Naive thymus-derived CD4-positive, alpha-beta T cell (primary cell): ENCODE measurements at regions of chr1 and their contacts with region 1.

Region 1: GRCh38 chr1:226424228-226425003 is 16.5 kb upstream of the PARP1 start:
- DNase-seq: peak in 5 of 9 donors; percentile 29 to 54 (median 44)
- ATAC-seq: peak; percentile 68
- H3K4me3 ChIP-seq: peak overlapping the region; percentile 33
- H3K4me3 Mint-ChIP-seq: peak overlapping the region in 1 of 10 donors; percentile 21
- H3K27ac ChIP-seq: no peak overlapping the region
- H3K27ac Mint-ChIP-seq: no peak overlapping the region
- H3K4me1 ChIP-seq: peaks cover 11% of the 10 kb centered on the region in 2 donors
- H3K4me1 Mint-ChIP-seq: peaks cover 15 to 34% (median 21%) of the 10 kb centered on the region in 7 donors
- H3K27me3 ChIP-seq: no peaks in the 10 kb centered on the region
- H3K27me3 Mint-ChIP-seq: peaks cover 0 to 8% (median 0%) of the 10 kb centered on the region in 5 donors

Region 2: GRCh38 chr1:226444901-226445300 is 20.5 kb after region 1 on chr1:
- CTCF ChIA-PET with region 1: interaction called, 31 read pairs
- POLR2A ChIA-PET with region 1: interaction called, 23 read pairs
- intact Hi-C with region 1: loop called (anchors 1 kb)
- DNase-seq: peak; percentile 18 to 89 (median 78)
- ATAC-seq: peak; percentile 98
- H3K4me3 ChIP-seq: no peak overlapping the region
- H3K4me3 Mint-ChIP-seq: peak overlapping the region; percentile 41 to 74 (median 58)
- H3K27ac ChIP-seq: no peak overlapping the region
- H3K27ac Mint-ChIP-seq: peak overlapping the region; percentile 64 to 96 (median 83)
- H3K4me1 ChIP-seq: peaks cover 16 to 26% of the 10 kb centered on the region in 2 donors
- H3K4me1 Mint-ChIP-seq: peaks cover 26 to 41% (median 35%) of the 10 kb centered on the region in 7 donors
- H3K27me3 ChIP-seq: no peaks in the 10 kb centered on the region
- H3K27me3 Mint-ChIP-seq: peaks cover 0 to 51% (median 0%) of the 10 kb centered on the region in 5 donors

Region 3: GRCh38 chr1:226608699-226609505 is 184.5 kb after region 1 on chr1:
- CTCF ChIA-PET with region 1: interaction called, 29 read pairs
- POLR2A ChIA-PET with region 1: interaction called, 3 read pairs
- intact Hi-C with region 1: loop called in 1 of 2 experiments (anchors 1 kb)
- DNase-seq: peak; percentile 44 to 75 (median 62)
- ATAC-seq: peak; percentile 84
- H3K4me3 ChIP-seq: no peak overlapping the region
- H3K4me3 Mint-ChIP-seq: no peak overlapping the region
- H3K27ac ChIP-seq: no peak overlapping the region
- H3K27ac Mint-ChIP-seq: peak overlapping the region in 1 of 9 donors; percentile 21
- H3K4me1 ChIP-seq: no peaks in the 10 kb centered on the region
- H3K4me1 Mint-ChIP-seq: peaks cover 0 to 3% (median 0%) of the 10 kb centered on the region in 7 donors
- H3K27me3 ChIP-seq: no peaks in the 10 kb centered on the region
- H3K27me3 Mint-ChIP-seq: peaks cover 0 to 6% (median 0%) of the 10 kb centered on the region in 5 donors

Region 4: DNA sequence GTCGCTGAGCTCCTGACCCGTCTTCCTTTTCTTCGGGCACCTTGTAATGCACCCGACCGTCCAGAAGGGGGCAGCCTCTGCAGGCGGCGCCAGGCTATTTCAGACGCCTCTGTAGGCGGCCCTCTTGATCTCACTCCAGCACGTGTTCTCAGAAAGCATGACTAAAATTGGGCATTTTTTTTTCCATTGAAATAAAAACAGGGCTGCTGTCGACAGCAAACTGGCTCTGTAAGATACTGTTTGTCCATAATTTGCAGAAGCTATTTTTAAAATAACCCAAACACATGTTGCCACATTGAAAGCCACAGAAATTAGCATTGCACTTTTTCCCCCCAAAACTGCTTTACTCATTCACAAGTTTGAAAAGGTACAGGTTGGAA is 202.2 kb after region 1 on chr1:
- CTCF ChIA-PET with region 1: interaction called, 5 read pairs
- POLR2A ChIA-PET with region 1: no interaction called
- intact Hi-C with region 1: loop called in 1 of 2 experiments (anchors 1 kb)
- DNase-seq: peak; percentile 62 to 85 (median 76)
- ATAC-seq: peak; percentile 97
- H3K4me3 ChIP-seq: peak overlapping the region; percentile 25
- H3K4me3 Mint-ChIP-seq: peak overlapping the region; percentile 29 to 72 (median 56)
- H3K27ac ChIP-seq: no peak overlapping the region
- H3K27ac Mint-ChIP-seq: peak overlapping the region in 7 of 9 donors; percentile 43 to 85 (median 67)
- H3K4me1 ChIP-seq: peaks cover 8 to 10% of the 10 kb centered on the region in 2 donors
- H3K4me1 Mint-ChIP-seq: peaks cover 9 to 33% (median 27%) of the 10 kb centered on the region in 7 donors
- H3K27me3 ChIP-seq: no peaks in the 10 kb centered on the region
- H3K27me3 Mint-ChIP-seq: peaks cover 0 to 8% (median 0%) of the 10 kb centered on the region in 5 donors